Gastrocnemius medialis (tissue), 4 donors: ENCODE measurements at regions of chr17 and their contacts with region 1.

Region 1: GRCh38 chr17:8991514-8992285 is 26.2 kb upstream of the PIK3R5 start:
- DNase-seq: peak in 1 of 2 donors; percentile 37
- ATAC-seq: peak in 1 of 2 donors; percentile 53
- H3K4me3 ChIP-seq: no peak overlapping the region
- H3K27ac ChIP-seq: no peak overlapping the region
- H3K4me1 ChIP-seq: no peaks in the 10 kb centered on the region
- H3K27me3 ChIP-seq: no peaks in the 10 kb centered on the region
- CTCF ChIP-seq: peak; percentile 41 to 67 (median 52)
- POLR2A ChIP-seq: no peak

Region 2: DNA sequence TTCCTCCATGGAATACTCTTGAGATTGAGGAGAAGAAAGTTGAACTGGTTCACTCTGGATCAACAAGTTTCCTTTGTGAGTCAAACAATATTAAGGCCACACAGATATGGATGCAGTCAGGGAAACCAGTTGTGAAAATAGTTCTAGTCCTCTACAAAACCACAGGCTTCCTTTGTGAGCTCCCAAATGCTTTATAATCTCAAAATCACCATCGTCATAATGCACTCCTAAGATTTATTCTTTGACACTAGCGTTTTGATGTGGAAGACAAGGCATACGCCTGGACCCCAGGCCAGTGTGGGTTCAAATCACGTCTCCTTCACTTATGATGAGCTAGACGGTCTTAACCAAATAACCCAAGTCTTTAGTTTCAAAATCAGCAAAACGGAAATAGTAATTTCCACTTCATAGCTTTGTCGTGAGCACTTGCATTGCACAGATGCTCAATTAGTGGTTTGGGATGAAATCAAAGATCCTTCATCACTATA is 441.3 kb after region 1 on chr17:
- in situ Hi-C with region 1: no loop called
- intact Hi-C with region 1: no loop called
- DNase-seq: no peak
- ATAC-seq: no peak
- H3K4me3 ChIP-seq: no peak overlapping the region
- H3K27ac ChIP-seq: peak overlapping the region; percentile 34 to 75 (median 51)
- H3K4me1 ChIP-seq: peaks cover 25 to 32% of the 10 kb centered on the region in 2 donors
- H3K27me3 ChIP-seq: no peaks in the 10 kb centered on the region
- CTCF ChIP-seq: no peak
- POLR2A ChIP-seq: no peak

Region 3: GRCh38 chr17:9529033-9529700 is 537.5 kb after region 1 on chr17:
- in situ Hi-C with region 1: loop called in 3 of 4 experiments (anchors 10 to 25 kb)
- intact Hi-C with region 1: no loop called
- DNase-seq: no peak
- ATAC-seq: no peak
- H3K4me3 ChIP-seq: no peak overlapping the region
- H3K27ac ChIP-seq: no peak overlapping the region
- H3K4me1 ChIP-seq: no peaks in the 10 kb centered on the region
- H3K27me3 ChIP-seq: no peaks in the 10 kb centered on the region
- CTCF ChIP-seq: peak in 3 of 5 experiments; percentile 16 to 31 (median 24)
- POLR2A ChIP-seq: no peak

Region 4: GRCh38 chr17:9536061-9536460 is 544.4 kb after region 1 on chr17:
- in situ Hi-C with region 1: loop called in 3 of 4 experiments (anchors 10 to 25 kb)
- intact Hi-C with region 1: no loop called
- DNase-seq: no peak
- ATAC-seq: no peak
- H3K4me3 ChIP-seq: no peak overlapping the region
- H3K27ac ChIP-seq: no peak overlapping the region
- H3K4me1 ChIP-seq: no peaks in the 10 kb centered on the region
- H3K27me3 ChIP-seq: no peaks in the 10 kb centered on the region
- CTCF ChIP-seq: no peak
- POLR2A ChIP-seq: no peak